ENCODE measurements at regions of chr7 and their contacts with region 1.

Region 1: DNA sequence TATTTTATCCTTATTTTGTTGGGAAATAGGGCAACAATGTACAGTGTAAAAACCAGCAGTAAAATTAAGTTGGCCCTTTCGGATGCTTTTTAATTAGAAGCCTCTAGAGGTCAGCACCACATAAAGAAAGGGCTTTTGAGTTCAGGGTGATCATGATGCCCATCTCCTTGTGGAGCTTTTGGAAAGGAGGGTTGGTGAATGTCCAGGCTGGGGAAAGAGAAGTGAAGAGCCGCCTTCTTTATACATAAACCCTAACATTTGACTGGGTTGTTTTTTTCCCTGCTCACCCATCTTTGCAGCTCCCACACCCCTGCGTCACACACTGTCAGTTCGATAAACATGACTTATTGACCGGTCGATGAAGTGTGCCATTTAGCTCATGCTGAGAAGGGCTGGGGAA is 29.8 kb downstream of the MTURN start:
- DNase-seq: no peak
- ATAC-seq: peak; percentile 62

Region 2: DNA sequence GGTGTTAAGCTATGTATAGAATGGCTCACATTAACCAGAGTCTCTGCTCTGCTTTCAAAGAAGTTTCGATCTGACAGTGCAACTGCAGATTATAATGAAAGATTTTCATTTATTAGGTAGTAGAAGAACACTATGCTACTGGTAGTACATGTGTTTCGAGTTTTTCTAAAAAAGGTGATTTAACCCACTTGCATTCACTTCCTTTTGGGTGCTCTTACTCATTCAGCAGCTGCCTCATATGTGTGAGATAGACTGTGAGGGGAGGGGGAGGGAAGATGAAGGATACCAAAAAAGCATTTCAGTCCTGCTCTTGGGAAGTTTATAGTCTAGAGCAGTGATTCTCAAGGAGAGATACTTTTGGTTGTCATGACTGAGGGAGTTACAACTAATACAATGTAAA is 116.0 kb before region 1 on chr7:
- intact Hi-C with region 1: no loop called
- DNase-seq: no peak
- ATAC-seq: no peak

Region 3: GRCh38 chr7:30406664-30407425 is 242.3 kb after region 1 on chr7:
- intact Hi-C with region 1: loop called in 1 of 2 experiments (anchors 10 kb)
- DNase-seq: no peak
- ATAC-seq: no peak